B cell (primary cell): ENCODE measurements at regions of chr15 and their contacts with region 1.

Region 1: GRCh38 chr15:67091071-67091979 is 25.9 kb downstream of the SMAD3 start:
- DNase-seq: peak; percentile 71
- ATAC-seq: peak; percentile 44
- H3K4me3 ChIP-seq: peak overlapping the region in 1 of 5 experiments; percentile 10
- H3K4me3 Mint-ChIP-seq: peak overlapping the region; percentile 79
- H3K27ac ChIP-seq: peak overlapping the region; percentile 88 to 90
- H3K27ac Mint-ChIP-seq: peak overlapping the region; percentile 97
- H3K4me1 ChIP-seq: peaks cover 97 to 98% of the 10 kb centered on the region in 2 donors
- H3K4me1 Mint-ChIP-seq: peaks cover 97% of the 10 kb centered on the region
- H3K27me3 ChIP-seq: no peaks in the 10 kb centered on the region
- H3K27me3 Mint-ChIP-seq: no peaks in the 10 kb centered on the region
- CTCF ChIP-seq: no peak

Region 2: DNA sequence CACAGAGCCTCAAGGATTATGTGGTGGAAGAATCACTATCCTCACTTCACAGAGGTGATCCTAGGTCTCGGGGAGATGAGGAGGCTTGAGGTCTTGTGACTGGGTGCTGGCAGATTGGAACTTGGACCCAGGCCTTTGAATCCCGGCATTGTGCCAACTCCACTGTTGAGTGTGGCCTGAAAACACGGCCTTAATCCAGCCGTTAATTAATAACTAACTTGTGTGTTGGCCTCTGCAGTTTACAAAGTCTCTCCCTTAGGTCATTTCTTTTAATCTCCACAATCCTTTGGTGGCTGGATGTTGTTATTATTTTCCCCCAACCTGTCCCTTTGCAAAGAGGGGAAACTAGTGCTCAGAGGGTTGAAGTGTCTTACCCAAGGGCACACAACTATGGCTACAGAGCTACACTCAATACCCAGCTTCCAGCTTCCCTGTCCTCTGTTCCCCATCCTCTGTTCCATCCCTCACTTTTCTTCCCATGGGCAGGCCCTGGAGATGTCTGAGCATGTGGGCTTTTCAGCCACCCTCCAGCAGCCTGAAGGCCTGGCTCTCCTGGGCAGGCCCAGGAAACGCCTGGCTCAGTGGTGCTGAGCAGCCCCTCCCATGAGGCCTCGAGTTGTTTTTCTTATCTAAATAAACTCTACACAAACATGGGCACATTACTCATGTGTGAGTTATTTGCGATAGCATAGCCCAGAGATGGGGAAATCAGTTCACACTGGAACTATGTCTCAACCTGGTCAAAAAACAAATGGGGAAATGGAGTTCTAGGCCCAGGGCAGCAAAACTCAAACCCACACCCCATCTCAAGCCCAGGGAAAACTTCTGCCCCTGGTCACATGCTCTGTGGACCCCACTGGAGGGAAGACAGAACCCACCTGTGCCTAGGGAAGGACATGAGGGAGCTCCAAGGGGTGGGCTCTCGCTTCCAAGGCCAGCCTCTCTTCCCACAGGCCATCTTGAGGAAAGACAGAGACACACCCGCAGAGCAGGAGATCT is 42.7 kb before region 1 on chr15:
- CTCF ChIA-PET with region 1: no interaction called
- POLR2A ChIA-PET with region 1: no interaction called
- intact Hi-C with region 1: no loop called
- DNase-seq: no peak
- ATAC-seq: peak; percentile 78
- H3K4me3 ChIP-seq: peak overlapping the region in 1 of 5 experiments; percentile 2
- H3K4me3 Mint-ChIP-seq: peak overlapping the region; percentile 27
- H3K27ac ChIP-seq: peak overlapping the region in 1 of 2 donors; percentile 11
- H3K27ac Mint-ChIP-seq: peak overlapping the region; percentile 64
- H3K4me1 ChIP-seq: peaks cover 36 to 37% of the 10 kb centered on the region in 2 donors
- H3K4me1 Mint-ChIP-seq: peaks cover 40% of the 10 kb centered on the region
- H3K27me3 ChIP-seq: no peaks in the 10 kb centered on the region
- H3K27me3 Mint-ChIP-seq: no peaks in the 10 kb centered on the region
- CTCF ChIP-seq: no peak

Region 3: DNA sequence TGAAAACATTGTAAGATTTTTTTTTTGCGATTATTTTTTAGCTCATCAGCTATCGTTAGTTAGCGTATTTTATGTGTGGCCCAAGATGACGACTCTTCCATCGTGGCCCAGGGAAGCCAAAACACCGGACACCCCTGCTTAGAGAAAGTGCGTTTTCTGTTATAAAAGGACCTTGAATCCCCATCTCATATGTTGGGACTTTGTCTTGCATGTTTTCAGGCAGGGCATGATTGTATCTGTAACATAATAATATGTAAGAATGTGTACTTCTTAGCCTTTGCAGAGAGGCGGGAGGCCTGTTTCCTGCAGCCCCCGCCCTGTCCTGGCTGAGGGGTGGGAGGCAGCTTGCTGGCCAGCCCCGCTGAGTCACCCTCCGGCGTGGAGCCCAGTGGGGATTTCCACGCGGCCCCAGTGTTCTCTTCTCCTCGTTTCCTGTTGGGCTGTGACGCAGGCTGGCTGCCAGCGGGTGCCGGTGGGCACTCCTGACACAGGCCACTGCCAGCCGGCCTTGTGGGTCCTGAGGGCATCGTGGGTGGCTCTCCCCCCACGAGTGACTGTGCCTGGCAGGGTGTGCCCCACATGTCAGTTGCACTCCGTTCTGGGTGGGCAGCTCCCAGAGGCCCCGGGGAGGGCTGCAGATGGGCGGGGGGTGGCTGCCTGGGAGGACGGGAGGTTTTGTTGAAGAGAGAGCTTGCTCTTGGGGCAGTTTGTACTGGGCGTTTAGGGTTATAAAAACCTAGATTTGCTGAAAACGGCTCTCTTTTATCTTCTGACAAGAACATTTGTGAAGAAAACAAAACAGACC is 29.7 kb after region 1 on chr15:
- CTCF ChIA-PET with region 1: interaction called, 102 read pairs
- POLR2A ChIA-PET with region 1: interaction called, 12 read pairs
- intact Hi-C with region 1: loop called (anchors 1 kb)
- DNase-seq: peak; percentile 94
- ATAC-seq: peak; percentile 89
- H3K4me3 ChIP-seq: peak overlapping the region; percentile 9 to 54 (median 24)
- H3K4me3 Mint-ChIP-seq: peak overlapping the region; percentile 82
- H3K27ac ChIP-seq: peak overlapping the region; percentile 90 to 91
- H3K27ac Mint-ChIP-seq: peak overlapping the region; percentile 96
- H3K4me1 ChIP-seq: peaks cover 83 to 93% of the 10 kb centered on the region in 2 donors
- H3K4me1 Mint-ChIP-seq: peaks cover 91% of the 10 kb centered on the region
- H3K27me3 ChIP-seq: no peaks in the 10 kb centered on the region
- H3K27me3 Mint-ChIP-seq: no peaks in the 10 kb centered on the region
- CTCF ChIP-seq: no peak

Region 4: DNA sequence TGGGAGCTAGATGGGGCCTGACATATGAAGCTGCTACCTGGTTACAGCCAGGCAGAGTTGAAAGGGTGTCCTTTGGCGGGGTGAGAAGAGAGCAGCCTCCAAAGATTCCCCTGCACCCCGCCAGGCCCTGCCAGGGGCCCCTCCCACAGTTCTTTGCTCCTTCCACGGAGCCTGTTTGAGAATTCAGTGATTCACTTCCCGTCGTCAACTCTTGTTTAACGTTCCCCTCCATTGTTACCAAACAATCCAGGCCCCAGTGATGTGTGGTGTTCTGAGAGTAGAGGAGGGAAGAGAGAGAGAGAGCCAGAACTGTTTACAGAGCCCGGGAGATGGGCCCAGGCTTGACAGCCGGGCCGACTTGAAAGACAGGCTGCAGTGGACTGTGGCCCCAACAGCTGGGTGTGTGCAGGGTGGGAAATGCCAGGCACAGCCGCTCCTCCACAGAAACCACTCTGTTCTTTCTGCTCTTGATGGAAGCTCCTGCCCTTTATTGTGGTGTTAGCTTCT is 55.6 kb after region 1 on chr15:
- CTCF ChIA-PET with region 1: no interaction called
- POLR2A ChIA-PET with region 1: no interaction called
- intact Hi-C with region 1: no loop called
- DNase-seq: no peak
- ATAC-seq: no peak
- H3K4me3 ChIP-seq: no peak overlapping the region
- H3K4me3 Mint-ChIP-seq: peak overlapping the region; percentile 17
- H3K27ac ChIP-seq: peak overlapping the region in 1 of 2 donors; percentile 2
- H3K27ac Mint-ChIP-seq: peak overlapping the region; percentile 21
- H3K4me1 ChIP-seq: peaks cover 70 to 82% of the 10 kb centered on the region in 2 donors
- H3K4me1 Mint-ChIP-seq: peaks cover 85% of the 10 kb centered on the region
- H3K27me3 ChIP-seq: no peaks in the 10 kb centered on the region
- H3K27me3 Mint-ChIP-seq: no peaks in the 10 kb centered on the region
- CTCF ChIP-seq: no peak